ENCODE measurements at regions of chr6 and their contacts with region 1.

Region 1: GRCh38 chr6:112065426-112065986 is 11.6 kb downstream of the CCN6 start:
- DNase-seq: no peak
- ATAC-seq: no peak
- H3K4me3 ChIP-seq: no peak overlapping the region
- H3K27ac ChIP-seq: no peak overlapping the region
- H3K4me1 ChIP-seq: no peaks in the 10 kb centered on the region
- H3K27me3 ChIP-seq: no peaks in the 10 kb centered on the region
- CTCF ChIP-seq: no peak
- EP300 ChIP-seq: no peak
- POLR2A ChIP-seq: no peak
- RAD21 ChIP-seq: no peak

Region 2: DNA sequence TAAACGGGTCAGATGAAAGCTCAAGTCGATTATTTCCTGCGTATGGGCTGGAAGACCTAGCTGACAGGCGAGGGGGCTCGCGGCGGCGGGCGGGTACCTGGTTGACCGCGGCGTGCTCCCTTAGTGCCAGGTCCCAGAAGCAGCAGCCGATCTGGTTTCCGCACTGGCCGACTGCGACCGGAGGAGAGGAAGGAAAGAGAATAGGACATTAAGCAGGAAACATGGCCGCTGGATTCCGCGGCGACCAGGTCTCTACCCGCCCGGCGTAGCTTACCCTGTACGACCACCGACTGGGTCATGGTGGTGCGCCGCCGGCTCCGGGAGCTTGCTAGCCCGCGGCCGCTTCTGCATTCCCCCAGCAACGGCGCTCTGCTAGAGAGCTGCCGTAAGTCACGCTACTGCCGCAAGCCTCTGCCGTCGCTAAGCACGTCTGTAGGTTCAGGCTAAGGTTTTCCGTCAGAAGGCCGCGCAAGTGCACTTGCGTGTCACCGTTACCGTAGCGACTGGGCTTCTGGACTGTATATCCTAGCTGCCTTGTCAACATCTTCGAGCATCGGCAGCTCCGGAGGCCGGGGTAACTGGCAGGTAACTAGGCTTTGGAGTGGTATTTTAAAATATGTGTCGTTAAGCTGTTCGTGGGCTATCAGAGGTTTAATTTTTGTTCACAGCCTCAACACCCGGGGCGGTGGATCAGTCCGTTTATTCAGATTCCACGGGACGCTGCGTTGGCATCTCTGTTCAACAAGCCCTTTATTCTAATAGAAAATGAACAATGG is 21.8 kb after region 1 on chr6 and contains the starts of genes FAM229B and TUBE1:
- CTCF ChIA-PET with region 1: interaction called, 16 read pairs
- POLR2A ChIA-PET with region 1: no interaction called
- RAD21 ChIA-PET with region 1: no interaction called
- SMC1A ChIA-PET with region 1: interaction called, 4 read pairs
- in situ Hi-C with region 1: no loop called
- intact Hi-C with region 1: no loop called
- DNase-seq: peak; percentile 79
- ATAC-seq: peak; percentile 98
- H3K4me3 ChIP-seq: peak within 1 kb of the TSS; percentile 88
- H3K27ac ChIP-seq: peak within 1 kb of the TSS; percentile 49
- H3K4me1 ChIP-seq: no peaks in the 10 kb centered on the region
- H3K27me3 ChIP-seq: peaks cover 0 to 4% of the 10 kb centered on the region in 2 experiments; a peak in 1 of 4 replicates
- CTCF ChIP-seq: 0 out of 6 replicates have a peak, but pooled peaks of 1 of the 3 experiments have one; percentile 1
- EP300 ChIP-seq: no peak
- POLR2A ChIP-seq: peak; percentile 89
- RAD21 ChIP-seq: no peak
- polyA plus RNA-seq, gene FAM229B: 5.3 to 5.7 TPM
- polyA plus RNA-seq, gene TUBE1: 6.3 to 8.6 TPM

Region 3: DNA sequence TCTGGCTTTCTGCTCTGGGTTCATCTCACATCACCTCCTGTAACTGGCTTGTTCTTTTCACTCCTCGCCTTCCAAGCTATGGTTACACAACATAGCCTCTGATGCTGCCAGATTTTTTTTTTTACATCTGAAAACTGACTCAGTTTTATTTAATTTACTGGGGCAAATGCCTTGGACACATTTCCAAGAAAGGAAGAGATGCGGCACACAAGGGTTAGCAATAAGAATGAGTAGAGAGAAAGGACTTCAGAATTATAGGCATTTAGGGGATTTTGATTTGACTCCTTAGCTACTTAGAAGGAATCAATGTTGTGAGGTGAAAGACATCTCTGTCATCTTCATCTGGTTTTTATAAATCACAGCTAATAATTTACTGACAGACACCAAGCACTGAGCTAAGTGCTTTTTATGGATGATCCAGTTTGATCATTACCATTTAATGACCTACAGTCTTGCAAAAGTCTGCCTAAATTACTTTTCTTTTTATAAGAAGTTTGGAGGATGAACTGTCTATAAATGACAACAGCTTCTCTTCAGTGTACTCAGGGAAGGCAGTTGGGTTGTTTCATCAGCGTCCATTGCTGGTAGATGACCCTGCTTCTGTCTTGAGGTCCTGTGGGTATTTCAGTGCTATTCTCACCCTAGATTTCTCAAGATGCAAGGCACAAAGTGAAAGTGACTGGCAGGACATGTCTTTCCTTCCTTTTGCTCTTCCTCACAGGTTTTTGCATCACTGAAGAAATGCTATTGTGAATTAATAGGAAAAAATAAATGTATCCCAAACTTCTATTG is 157.8 kb after region 1 on chr6:
- CTCF ChIA-PET with region 1: no interaction called
- POLR2A ChIA-PET with region 1: no interaction called
- RAD21 ChIA-PET with region 1: no interaction called
- SMC1A ChIA-PET with region 1: no interaction called
- in situ Hi-C with region 1: no loop called
- intact Hi-C with region 1: no loop called
- DNase-seq: no peak
- ATAC-seq: no peak
- H3K4me3 ChIP-seq: no peak overlapping the region
- H3K27ac ChIP-seq: no peak overlapping the region
- H3K4me1 ChIP-seq: no peaks in the 10 kb centered on the region
- H3K27me3 ChIP-seq: no peaks in the 10 kb centered on the region; a peak in 1 of 4 replicates
- CTCF ChIP-seq: no peak
- EP300 ChIP-seq: no peak
- POLR2A ChIP-seq: no peak
- RAD21 ChIP-seq: no peak